ENCODE measurements at regions of chr15 and their contacts with region 1.

Region 1: DNA sequence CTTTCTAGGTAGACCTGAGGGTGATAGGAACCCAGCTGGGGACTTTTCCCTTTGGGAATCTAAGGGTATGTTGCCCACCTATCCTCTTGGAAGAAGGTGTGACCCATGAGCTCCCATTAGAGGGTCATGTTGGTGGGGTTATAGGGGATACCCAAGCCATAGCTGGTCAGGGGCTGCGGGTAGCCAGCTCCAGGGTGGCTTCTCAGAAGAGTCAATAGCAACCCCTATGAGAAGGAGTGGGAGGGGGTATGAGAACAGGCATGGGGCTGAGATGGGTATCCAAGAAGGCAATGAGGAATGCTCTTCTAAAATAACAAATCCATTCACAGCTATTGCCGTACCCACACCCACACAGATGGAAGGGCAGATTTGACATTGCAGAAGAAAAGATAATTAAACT is 217.8 kb downstream of the UACA start:
- DNase-seq: no peak
- H3K4me3 Mint-ChIP-seq: no peak overlapping the region
- H3K27ac Mint-ChIP-seq: no peak overlapping the region
- H3K4me1 Mint-ChIP-seq: peaks cover 42% of the 10 kb centered on the region
- H3K27me3 Mint-ChIP-seq: no peaks in the 10 kb centered on the region

Region 2: GRCh38 chr15:70400766-70401541 is 144.6 kb before region 1 on chr15:
- CTCF ChIA-PET with region 1: no interaction called
- POLR2A ChIA-PET with region 1: no interaction called
- intact Hi-C with region 1: no loop called
- DNase-seq: no peak
- H3K4me3 Mint-ChIP-seq: no peak overlapping the region
- H3K27ac Mint-ChIP-seq: no peak overlapping the region
- H3K4me1 Mint-ChIP-seq: no peaks in the 10 kb centered on the region
- H3K27me3 Mint-ChIP-seq: peaks cover 9% of the 10 kb centered on the region

Region 3: DNA sequence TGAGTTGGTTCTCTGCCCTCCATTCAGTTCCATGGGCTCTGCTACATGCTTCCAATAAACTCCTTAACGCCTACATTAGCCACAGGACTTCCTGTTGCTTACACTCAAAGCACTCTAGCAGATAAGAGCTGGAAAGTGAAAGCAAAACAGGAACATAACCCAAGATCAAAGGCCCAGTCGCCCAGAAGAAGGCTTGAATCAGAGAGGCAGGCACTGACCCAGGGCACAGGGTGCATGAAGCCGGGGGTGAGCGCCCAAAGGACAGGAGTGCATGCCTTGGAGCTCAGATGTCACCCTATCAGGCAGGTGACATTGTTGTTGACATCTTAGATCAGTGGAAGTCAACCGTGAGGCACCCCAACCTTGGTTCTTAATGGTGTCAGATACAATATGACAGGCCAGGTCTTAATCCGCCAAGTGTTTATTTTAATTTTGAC is 17.2 kb before region 1 on chr15:
- CTCF ChIA-PET with region 1: interaction called, 3 read pairs
- POLR2A ChIA-PET with region 1: interaction called, 3 read pairs
- intact Hi-C with region 1: loop called (anchors 1 kb)
- DNase-seq: peak; percentile 79
- H3K4me3 Mint-ChIP-seq: peak overlapping the region; percentile 33
- H3K27ac Mint-ChIP-seq: peak overlapping the region; percentile 52
- H3K4me1 Mint-ChIP-seq: peaks cover 60% of the 10 kb centered on the region
- H3K27me3 Mint-ChIP-seq: no peaks in the 10 kb centered on the region